CD4-positive, alpha-beta T cell (primary cell): ENCODE measurements at regions of chr1 and their contacts with region 1.

Region 1: GRCh38 chr1:180662709-180663108 is 30.9 kb downstream of the XPR1 start:
- DNase-seq: no peak
- ATAC-seq: no peak
- H3K4me3 ChIP-seq: no peak overlapping the region
- H3K4me3 Mint-ChIP-seq: no peak overlapping the region
- H3K27ac ChIP-seq: no peak overlapping the region
- H3K27ac Mint-ChIP-seq: no peak overlapping the region
- H3K4me1 ChIP-seq: peaks cover 4% of the 10 kb centered on the region
- H3K4me1 Mint-ChIP-seq: peaks cover 4% of the 10 kb centered on the region
- H3K27me3 ChIP-seq: no peaks in the 10 kb centered on the region
- H3K27me3 Mint-ChIP-seq: no peaks in the 10 kb centered on the region
- CTCF ChIP-seq: no peak

Region 2: DNA sequence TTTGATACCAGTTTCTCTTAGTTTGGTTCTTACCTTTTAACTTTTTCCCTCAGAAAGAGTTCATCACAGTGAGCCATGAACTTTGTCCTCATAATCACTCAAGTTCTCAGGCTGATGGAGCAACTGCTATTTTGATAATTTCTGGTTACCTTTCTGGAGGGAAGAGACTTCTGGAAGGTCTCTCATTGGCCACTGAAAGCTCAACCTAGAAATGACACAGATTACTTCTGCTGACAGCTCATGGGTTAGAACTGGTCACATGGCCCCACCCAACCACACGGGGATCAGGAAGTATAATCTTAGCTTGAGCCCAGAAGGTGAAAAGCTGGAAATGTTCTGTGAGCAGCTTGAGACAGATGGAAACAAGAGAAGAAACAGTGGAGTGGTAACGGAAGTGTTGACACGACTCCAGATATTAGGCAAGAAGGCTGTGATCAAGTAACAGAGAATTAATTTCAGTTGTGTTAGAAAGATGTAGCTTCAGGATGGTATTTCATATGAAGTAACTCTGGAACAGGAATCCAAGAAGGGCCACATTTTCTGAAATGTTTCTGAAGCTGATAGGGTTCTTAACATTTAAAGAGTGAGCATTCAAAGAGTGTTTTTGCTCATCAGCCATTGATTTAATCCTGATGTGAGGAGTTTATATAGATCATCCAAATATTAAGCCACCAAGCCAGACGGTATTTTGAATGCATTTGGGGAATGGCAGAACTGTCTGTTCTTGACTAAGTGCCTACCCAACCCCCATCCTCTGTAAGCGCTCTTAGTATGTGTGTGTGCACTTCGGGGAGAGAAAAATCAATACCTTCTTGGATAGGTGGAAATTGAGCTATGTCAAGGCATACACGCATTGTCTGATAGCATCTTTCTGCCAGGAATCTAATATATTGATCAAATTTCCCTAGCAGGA is 52.8 kb before region 1 on chr1:
- CTCF ChIA-PET with region 1: no interaction called
- POLR2A ChIA-PET with region 1: no interaction called
- intact Hi-C with region 1: loop called in 1 of 2 experiments (anchors 10 kb)
- DNase-seq: no peak
- ATAC-seq: no peak
- H3K4me3 ChIP-seq: no peak overlapping the region
- H3K4me3 Mint-ChIP-seq: no peak overlapping the region
- H3K27ac ChIP-seq: no peak overlapping the region
- H3K27ac Mint-ChIP-seq: no peak overlapping the region
- H3K4me1 ChIP-seq: no peaks in the 10 kb centered on the region
- H3K4me1 Mint-ChIP-seq: peaks cover 6% of the 10 kb centered on the region
- H3K27me3 ChIP-seq: no peaks in the 10 kb centered on the region
- H3K27me3 Mint-ChIP-seq: no peaks in the 10 kb centered on the region
- CTCF ChIP-seq: no peak